GM18951 (cell line): ENCODE measurements at regions of chr5 and their contacts with region 1.

Region 1: GRCh38 chr5:154654486-154655371 is 100.4 kb upstream of the LARP1 start:
- POLR2A ChIP-seq: no peak

Region 2: GRCh38 chr5:154801083-154801482 is 146.4 kb after region 1 on chr5:
- in situ Hi-C with region 1: loop called (anchors 10 kb)
- POLR2A ChIP-seq: no peak

Region 3: GRCh38 chr5:154818471-154819116 is 163.9 kb after region 1 on chr5:
- in situ Hi-C with region 1: no loop called
- POLR2A ChIP-seq: no peak